CD14-positive monocyte (primary cell): ENCODE measurements at regions of chr4 and their contacts with region 1.

Region 1: GRCh38 chr4:2963175-2963965 is at the starts of genes GRK4 and NOP14:
- DNase-seq: peak; percentile 97 to 98 (median 97)
- H3K4me3 ChIP-seq: peak within 1 kb of the TSS; percentile 71 to 95 (median 73)
- H3K4me3 Mint-ChIP-seq: peak within 1 kb of the TSS; percentile 93 to 95
- H3K27ac ChIP-seq: peak within 1 kb of the TSS; percentile 69 to 95
- H3K27ac Mint-ChIP-seq: peak within 1 kb of the TSS; percentile 86 to 97 (median 92)
- H3K4me1 ChIP-seq: peaks cover 26 to 34% of the 10 kb centered on the region in 2 donors
- H3K4me1 Mint-ChIP-seq: peaks cover 30% of the 10 kb centered on the region
- H3K27me3 ChIP-seq: no peaks in the 10 kb centered on the region
- H3K27me3 Mint-ChIP-seq: peaks cover 4 to 7% (median 5%) of the 10 kb centered on the region in 3 donors
- CTCF ChIP-seq: peak; percentile 36
- polyA plus RNA-seq, gene GRK4: 1.1 to 1.2 (median 1.2) TPM
- polyA plus RNA-seq, gene NOP14: 3.9 to 6.2 (median 4.3) TPM

Region 2: GRCh38 chr4:1856042-1856788 is 1107.2 kb before region 1 on chr4 and contains the start of gene LETM1:
- intact Hi-C with region 1: loop called (anchors 10 kb)
- DNase-seq: peak; percentile 78 to 89 (median 87)
- H3K4me3 ChIP-seq: peak within 1 kb of the TSS; percentile 72 to 89 (median 76)
- H3K4me3 Mint-ChIP-seq: peak within 1 kb of the TSS; percentile 82 to 85
- H3K27ac ChIP-seq: peak within 1 kb of the TSS; percentile 27 to 56
- H3K27ac Mint-ChIP-seq: peak within 1 kb of the TSS in 6 of 7 donors; percentile 15 to 69 (median 62)
- H3K4me1 ChIP-seq: peaks cover 21 to 29% of the 10 kb centered on the region in 2 donors
- H3K4me1 Mint-ChIP-seq: peaks cover 24% of the 10 kb centered on the region
- H3K27me3 ChIP-seq: no peaks in the 10 kb centered on the region
- H3K27me3 Mint-ChIP-seq: peaks cover 0 to 7% (median 6%) of the 10 kb centered on the region in 3 donors
- CTCF ChIP-seq: no peak
- polyA plus RNA-seq, gene LETM1: 6.2 to 18.6 (median 9.0) TPM

Region 3: GRCh38 chr4:2418650-2419571 is 544.5 kb before region 1 on chr4 and contains the start of gene CFAP99:
- intact Hi-C with region 1: loop called in 1 of 2 experiments (anchors 5 kb)
- DNase-seq: peak; percentile 93 to 95 (median 95)
- H3K4me3 ChIP-seq: peak within 1 kb of the TSS; percentile 48 to 76 (median 53)
- H3K4me3 Mint-ChIP-seq: peak within 1 kb of the TSS; percentile 91 to 95
- H3K27ac ChIP-seq: peak within 1 kb of the TSS; percentile 38 to 65
- H3K27ac Mint-ChIP-seq: peak within 1 kb of the TSS; percentile 75 to 97 (median 90)
- H3K4me1 ChIP-seq: peaks cover 39 to 49% of the 10 kb centered on the region in 2 donors
- H3K4me1 Mint-ChIP-seq: peaks cover 44% of the 10 kb centered on the region
- H3K27me3 ChIP-seq: peaks cover 16 to 41% of the 10 kb centered on the region in 2 donors
- H3K27me3 Mint-ChIP-seq: peaks cover 46 to 55% (median 50%) of the 10 kb centered on the region in 3 donors
- CTCF ChIP-seq: no peak
- polyA plus RNA-seq, gene CFAP99: 0.15 to 0.27 TPM in 2 of 3 donors, not detected in the other

Region 4: GRCh38 chr4:2536193-2537010 is 427.0 kb before region 1 on chr4 and contains the start of gene FAM193A:
- intact Hi-C with region 1: loop called in 1 of 2 experiments (anchors 5 kb)
- DNase-seq: peak; percentile 97 to 100 (median 99)
- H3K4me3 ChIP-seq: peak within 1 kb of the TSS; percentile 83 to 93 (median 83)
- H3K4me3 Mint-ChIP-seq: peak within 1 kb of the TSS; percentile 90 to 95
- H3K27ac ChIP-seq: peak within 1 kb of the TSS; percentile 89 to 98
- H3K27ac Mint-ChIP-seq: peak within 1 kb of the TSS; percentile 90 to 98 (median 96)
- H3K4me1 ChIP-seq: peaks cover 19 to 23% of the 10 kb centered on the region in 2 donors
- H3K4me1 Mint-ChIP-seq: peaks cover 23% of the 10 kb centered on the region
- H3K27me3 ChIP-seq: no peaks in the 10 kb centered on the region
- H3K27me3 Mint-ChIP-seq: peaks cover 1 to 2% (median 1%) of the 10 kb centered on the region in 3 donors
- CTCF ChIP-seq: no peak
- polyA plus RNA-seq, gene FAM193A: 0.66 to 11.8 (median 0.82) TPM

Region 5: GRCh38 chr4:2598511-2599303 is 364.7 kb before region 1 on chr4:
- intact Hi-C with region 1: no loop called
- DNase-seq: peak; percentile 32 to 54 (median 41)
- H3K4me3 ChIP-seq: no peak overlapping the region
- H3K4me3 Mint-ChIP-seq: peak overlapping the region in 1 of 2 donors; percentile 83
- H3K27ac ChIP-seq: peak overlapping the region; percentile 4 to 31
- H3K27ac Mint-ChIP-seq: peak overlapping the region; percentile 35 to 85 (median 71)
- H3K4me1 ChIP-seq: peaks cover 12 to 20% of the 10 kb centered on the region in 2 donors
- H3K4me1 Mint-ChIP-seq: peaks cover 25% of the 10 kb centered on the region
- H3K27me3 ChIP-seq: no peaks in the 10 kb centered on the region
- H3K27me3 Mint-ChIP-seq: peaks cover 0 to 1% (median 0%) of the 10 kb centered on the region in 3 donors
- CTCF ChIP-seq: peak; percentile 39

Region 6: GRCh38 chr4:2934813-2935761 is 28.3 kb before region 1 on chr4:
- intact Hi-C with region 1: loop called in 1 of 2 experiments (anchors 2 kb)
- DNase-seq: peak; percentile 90 to 93 (median 92)
- H3K4me3 ChIP-seq: peak overlapping the region; percentile 72 to 93 (median 92)
- H3K4me3 Mint-ChIP-seq: peak overlapping the region; percentile 76 to 86
- H3K27ac ChIP-seq: peak overlapping the region; percentile 54 to 90
- H3K27ac Mint-ChIP-seq: peak overlapping the region; percentile 62 to 87 (median 81)
- H3K4me1 ChIP-seq: peaks cover 46% of the 10 kb centered on the region in 2 donors
- H3K4me1 Mint-ChIP-seq: peaks cover 44% of the 10 kb centered on the region
- H3K27me3 ChIP-seq: no peaks in the 10 kb centered on the region
- H3K27me3 Mint-ChIP-seq: no peaks in the 10 kb centered on the region
- CTCF ChIP-seq: no peak

Region 7: GRCh38 chr4:3047464-3048286 is 84.3 kb after region 1 on chr4:
- intact Hi-C with region 1: loop called in 1 of 2 experiments (anchors 5 kb)
- DNase-seq: peak; percentile 68 to 81 (median 78)
- H3K4me3 ChIP-seq: peak overlapping the region; percentile 6 to 61 (median 27)
- H3K4me3 Mint-ChIP-seq: peak overlapping the region; percentile 60 to 78
- H3K27ac ChIP-seq: peak overlapping the region in 1 of 2 donors; percentile 71
- H3K27ac Mint-ChIP-seq: peak overlapping the region; percentile 70 to 95 (median 86)
- H3K4me1 ChIP-seq: peaks cover 22 to 44% of the 10 kb centered on the region in 2 donors
- H3K4me1 Mint-ChIP-seq: peaks cover 35% of the 10 kb centered on the region
- H3K27me3 ChIP-seq: no peaks in the 10 kb centered on the region
- H3K27me3 Mint-ChIP-seq: peaks cover 0 to 5% (median 2%) of the 10 kb centered on the region in 3 donors
- CTCF ChIP-seq: peak; percentile 84

Region 8: DNA sequence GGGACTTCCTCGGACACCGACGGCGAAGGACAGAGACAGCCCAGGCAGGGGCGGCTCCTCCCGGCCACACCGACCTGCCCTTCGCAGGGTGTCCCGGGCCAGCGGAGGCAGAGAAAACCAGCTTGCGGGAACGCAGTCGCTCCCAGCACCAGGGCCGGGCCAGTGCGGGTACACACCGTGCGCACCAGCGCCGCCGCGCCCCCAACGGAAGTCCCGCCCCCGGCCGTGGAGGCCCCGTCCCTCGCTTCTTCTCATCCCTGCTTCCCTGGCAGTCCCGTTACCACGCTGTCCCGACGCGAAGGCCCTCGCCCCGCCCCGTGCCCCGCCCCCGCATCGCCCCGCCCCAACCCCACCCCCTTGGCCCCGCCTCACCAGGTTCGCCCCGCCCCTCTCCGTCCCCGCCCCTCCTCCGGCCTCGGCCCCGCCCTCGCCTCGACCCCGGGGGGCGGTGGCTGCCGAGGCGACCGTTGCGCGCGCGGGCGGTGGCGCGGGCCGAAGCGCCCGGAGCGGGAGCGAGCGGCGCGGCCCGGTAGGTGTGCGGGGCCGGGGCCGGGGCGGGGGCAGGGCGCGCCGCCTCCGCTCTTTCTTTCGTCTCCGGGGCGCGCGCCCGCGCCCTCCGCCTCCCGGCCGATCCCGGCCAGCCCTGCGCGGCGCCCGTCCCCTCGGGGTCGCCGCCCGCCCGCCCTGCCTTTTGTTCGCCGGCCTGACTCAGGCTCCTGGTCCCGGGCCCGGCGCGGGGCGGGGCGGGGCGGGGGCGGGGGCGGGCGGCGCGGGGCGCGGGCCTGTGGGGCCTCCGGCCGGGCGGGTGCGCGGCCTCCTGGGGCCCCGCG is 329.4 kb after region 1 on chr4 and contains the start of gene RGS12:
- intact Hi-C with region 1: loop called in 1 of 2 experiments (anchors 5 kb)
- DNase-seq: peak; percentile 81 to 90 (median 83)
- H3K4me3 ChIP-seq: peak within 1 kb of the TSS; percentile 84 to 86 (median 85)
- H3K4me3 Mint-ChIP-seq: peak within 1 kb of the TSS; percentile 87 to 93
- H3K27ac ChIP-seq: peak within 1 kb of the TSS; percentile 80 to 87
- H3K27ac Mint-ChIP-seq: peak within 1 kb of the TSS; percentile 80 to 95 (median 89)
- H3K4me1 ChIP-seq: peaks cover 20 to 30% of the 10 kb centered on the region in 2 donors
- H3K4me1 Mint-ChIP-seq: peaks cover 24% of the 10 kb centered on the region
- H3K27me3 ChIP-seq: peaks cover 0 to 3% of the 10 kb centered on the region in 2 donors
- H3K27me3 Mint-ChIP-seq: peaks cover 14 to 29% (median 22%) of the 10 kb centered on the region in 3 donors
- CTCF ChIP-seq: no peak
- polyA plus RNA-seq, gene RGS12: 0.75 to 15.3 (median 2.7) TPM